ENCODE measurements at regions of chr9 and their contacts with region 1.

Region 1: DNA sequence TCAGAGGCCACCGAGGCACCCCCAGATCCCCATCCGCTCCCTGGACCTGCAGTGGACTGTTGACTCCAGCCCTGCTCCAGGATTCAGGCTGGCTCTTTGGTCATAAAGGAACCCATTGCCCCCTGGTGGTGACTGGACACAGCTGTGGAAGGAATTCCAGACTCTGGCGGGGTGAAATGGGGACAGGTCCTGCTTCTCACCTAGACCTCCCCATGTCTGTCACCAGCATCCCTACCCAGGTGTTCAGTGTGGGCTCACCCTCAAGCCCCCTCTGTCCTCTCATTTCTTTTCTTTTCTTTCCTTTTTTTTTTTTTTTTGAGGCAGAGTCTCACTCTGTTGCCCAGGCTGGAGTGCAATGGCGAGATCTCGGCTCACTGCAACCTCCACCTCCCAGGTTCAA is 25.5 kb upstream of the STXBP1 start:
- DNase-seq: peak; percentile 78
- H3K4me3 Mint-ChIP-seq: no peak overlapping the region
- H3K27ac Mint-ChIP-seq: no peak overlapping the region
- H3K4me1 Mint-ChIP-seq: peaks cover 20% of the 10 kb centered on the region
- H3K27me3 Mint-ChIP-seq: peaks cover 35% of the 10 kb centered on the region

Region 2: DNA sequence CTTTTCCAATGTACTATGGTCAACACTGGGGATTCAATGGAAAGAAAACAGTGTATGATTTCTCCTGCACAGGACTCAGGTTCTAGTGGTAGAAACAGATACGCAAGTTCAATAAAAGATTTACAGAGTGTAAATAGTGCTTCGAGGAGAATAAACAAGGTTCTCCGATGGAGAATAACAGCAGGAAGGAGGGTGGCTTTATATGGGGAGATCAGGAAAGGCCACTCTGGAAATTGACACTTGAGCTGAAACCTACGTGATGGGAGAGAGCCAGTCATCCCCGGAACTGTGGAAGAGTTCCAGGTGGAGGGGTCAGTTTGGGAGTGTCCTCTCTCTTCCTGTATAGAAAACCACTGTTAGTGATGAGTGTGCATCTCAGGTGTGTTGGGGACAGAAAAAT is 256.0 kb before region 1 on chr9:
- CTCF ChIA-PET with region 1: no interaction called
- DNase-seq: no peak
- H3K4me3 Mint-ChIP-seq: no peak overlapping the region
- H3K27ac Mint-ChIP-seq: no peak overlapping the region
- H3K4me1 Mint-ChIP-seq: no peaks in the 10 kb centered on the region
- H3K27me3 Mint-ChIP-seq: peaks cover 26% of the 10 kb centered on the region

Region 3: DNA sequence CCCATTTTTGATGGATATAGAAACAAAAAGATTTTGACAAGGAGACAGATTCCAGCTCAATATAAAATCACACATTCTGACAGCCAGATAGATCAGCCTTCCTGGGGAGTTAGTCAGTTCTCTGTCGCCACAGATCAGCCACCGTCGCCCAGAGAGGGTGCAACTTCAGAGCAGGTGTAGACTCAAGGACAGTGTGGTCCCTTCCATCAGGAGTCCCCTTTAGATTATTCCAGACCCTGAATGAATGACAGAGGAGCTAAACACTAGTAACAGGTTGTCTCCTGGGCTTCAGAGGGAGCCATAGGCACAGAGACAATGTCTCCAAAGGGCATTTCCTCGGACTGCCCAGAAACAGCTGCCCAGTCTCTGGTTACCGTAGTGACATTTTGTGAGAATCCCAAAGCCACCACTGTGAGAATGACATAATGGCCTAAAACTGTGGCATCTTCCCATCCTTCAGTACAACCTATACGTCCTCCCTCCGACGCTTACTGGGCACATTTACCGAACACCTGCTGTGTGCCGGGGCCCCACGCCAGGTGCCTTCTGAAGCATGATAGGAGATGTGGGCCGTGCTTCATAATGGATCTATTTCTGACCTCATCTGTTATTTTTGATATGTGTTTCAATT is 236.9 kb before region 1 on chr9:
- CTCF ChIA-PET with region 1: no interaction called
- DNase-seq: no peak
- H3K4me3 Mint-ChIP-seq: no peak overlapping the region
- H3K27ac Mint-ChIP-seq: no peak overlapping the region
- H3K4me1 Mint-ChIP-seq: no peaks in the 10 kb centered on the region
- H3K27me3 Mint-ChIP-seq: peaks cover 37% of the 10 kb centered on the region

Region 4: GRCh38 chr9:127463911-127464310 is 122.6 kb before region 1 on chr9:
- CTCF ChIA-PET with region 1: no interaction called
- DNase-seq: no peak
- H3K4me3 Mint-ChIP-seq: no peak overlapping the region
- H3K27ac Mint-ChIP-seq: no peak overlapping the region
- H3K4me1 Mint-ChIP-seq: no peaks in the 10 kb centered on the region
- H3K27me3 Mint-ChIP-seq: no peaks in the 10 kb centered on the region

Region 5: DNA sequence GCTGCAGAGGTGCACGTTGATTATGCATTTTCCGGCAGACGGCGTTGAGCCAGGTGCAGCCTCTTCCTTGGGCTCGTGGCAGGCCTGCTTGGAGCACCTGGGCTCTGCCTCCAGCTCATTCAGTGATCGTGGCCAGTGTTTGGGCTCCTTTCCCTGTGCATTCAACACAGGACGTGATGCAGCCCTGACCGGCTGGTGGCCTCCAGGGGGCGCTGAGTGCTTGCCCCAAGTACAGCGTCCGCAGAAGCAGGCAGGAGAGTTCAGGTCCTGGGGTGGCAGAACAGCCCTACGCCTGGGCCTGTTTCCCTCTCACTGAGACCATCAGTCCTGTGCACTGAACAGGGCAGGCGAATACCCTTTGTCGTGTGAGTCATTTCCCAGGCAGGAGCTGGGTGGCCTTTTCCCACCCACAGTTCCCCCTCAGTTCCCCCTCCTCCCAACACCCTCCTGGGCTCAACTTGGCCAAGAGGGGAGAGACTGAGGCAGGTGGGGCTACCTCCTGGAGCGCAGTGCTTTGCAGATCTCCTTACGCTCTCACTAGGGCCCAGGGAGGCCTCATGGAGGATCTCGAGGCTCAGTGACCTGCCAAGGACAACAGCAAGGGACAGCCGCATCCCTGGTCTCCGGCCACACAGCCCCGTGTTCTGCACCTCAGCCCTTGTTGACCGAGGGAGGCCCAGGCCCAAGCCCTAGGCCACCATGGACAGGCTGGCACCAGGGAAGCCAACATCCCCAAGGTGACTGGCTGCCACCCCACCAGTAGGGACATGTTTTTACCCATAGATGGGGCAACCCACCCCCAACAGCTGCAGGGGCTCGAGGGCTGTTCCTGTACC is 82.4 kb before region 1 on chr9:
- CTCF ChIA-PET with region 1: interaction called, 32 read pairs
- DNase-seq: peak; percentile 87
- H3K4me3 Mint-ChIP-seq: no peak overlapping the region
- H3K27ac Mint-ChIP-seq: peak overlapping the region; percentile 55
- H3K4me1 Mint-ChIP-seq: no peaks in the 10 kb centered on the region
- H3K27me3 Mint-ChIP-seq: no peaks in the 10 kb centered on the region

Region 6: GRCh38 chr9:127525401-127526187 is 60.9 kb before region 1 on chr9:
- CTCF ChIA-PET with region 1: interaction called, 20 read pairs
- DNase-seq: peak; percentile 46
- H3K4me3 Mint-ChIP-seq: no peak overlapping the region
- H3K27ac Mint-ChIP-seq: no peak overlapping the region
- H3K4me1 Mint-ChIP-seq: peaks cover 4% of the 10 kb centered on the region
- H3K27me3 Mint-ChIP-seq: no peaks in the 10 kb centered on the region

Region 7: DNA sequence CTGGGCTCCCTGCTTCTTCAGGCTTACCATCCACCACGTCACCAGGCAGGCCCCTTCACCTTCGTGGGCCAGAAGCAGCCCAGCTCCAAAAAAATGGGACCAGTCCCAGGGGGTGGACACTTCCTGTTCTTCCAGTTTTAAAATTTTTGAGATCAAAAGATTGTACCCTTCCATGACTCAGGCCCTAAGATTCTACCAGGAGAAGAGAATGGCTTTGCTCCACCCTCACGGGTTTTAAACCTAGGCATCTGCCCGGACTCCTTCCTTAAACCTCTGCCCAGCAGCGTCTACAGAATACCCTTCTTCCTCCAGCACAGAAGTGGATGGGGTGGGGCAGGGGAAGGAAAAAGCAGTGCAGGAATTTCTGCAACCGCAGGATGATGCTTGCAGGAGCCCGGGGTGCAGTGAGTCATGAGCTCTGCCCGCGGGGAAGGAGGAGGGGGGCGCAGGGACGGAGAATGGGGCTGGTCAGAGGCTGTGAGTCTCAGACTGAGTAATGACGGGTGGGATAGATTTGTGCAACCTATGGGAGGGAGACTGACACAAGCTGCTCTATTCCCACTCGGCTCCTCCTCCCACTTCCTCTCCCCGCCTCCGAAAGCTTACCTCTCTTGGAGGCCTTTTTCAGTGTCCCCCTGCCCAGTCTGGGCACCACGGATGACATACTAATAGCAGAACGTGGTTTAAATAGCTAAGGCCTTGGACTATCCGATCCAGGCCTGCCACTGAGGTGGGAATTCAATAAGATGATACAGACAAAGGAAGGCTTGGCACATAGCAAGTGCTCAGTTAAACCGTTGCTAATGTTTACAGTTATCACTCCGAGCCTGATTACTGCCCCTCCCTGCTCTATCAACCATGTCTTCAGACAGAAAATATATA is 24.7 kb before region 1 on chr9:
- CTCF ChIA-PET with region 1: no interaction called
- DNase-seq: no peak
- H3K4me3 Mint-ChIP-seq: peak overlapping the region; percentile 0
- H3K27ac Mint-ChIP-seq: peak overlapping the region; percentile 11
- H3K4me1 Mint-ChIP-seq: peaks cover 91% of the 10 kb centered on the region
- H3K27me3 Mint-ChIP-seq: no peaks in the 10 kb centered on the region

Region 8: GRCh38 chr9:127608104-127608966 is 21.8 kb after region 1 on chr9:
- CTCF ChIA-PET with region 1: interaction called, 12 read pairs
- DNase-seq: peak; percentile 82
- H3K4me3 Mint-ChIP-seq: peak overlapping the region; percentile 74
- H3K27ac Mint-ChIP-seq: no peak overlapping the region
- H3K4me1 Mint-ChIP-seq: peaks cover 33% of the 10 kb centered on the region
- H3K27me3 Mint-ChIP-seq: peaks cover 72% of the 10 kb centered on the region